CD8-positive, alpha-beta T cell (primary cell): ENCODE measurements at regions of chrX and their contacts with region 1.

Region 1: DNA sequence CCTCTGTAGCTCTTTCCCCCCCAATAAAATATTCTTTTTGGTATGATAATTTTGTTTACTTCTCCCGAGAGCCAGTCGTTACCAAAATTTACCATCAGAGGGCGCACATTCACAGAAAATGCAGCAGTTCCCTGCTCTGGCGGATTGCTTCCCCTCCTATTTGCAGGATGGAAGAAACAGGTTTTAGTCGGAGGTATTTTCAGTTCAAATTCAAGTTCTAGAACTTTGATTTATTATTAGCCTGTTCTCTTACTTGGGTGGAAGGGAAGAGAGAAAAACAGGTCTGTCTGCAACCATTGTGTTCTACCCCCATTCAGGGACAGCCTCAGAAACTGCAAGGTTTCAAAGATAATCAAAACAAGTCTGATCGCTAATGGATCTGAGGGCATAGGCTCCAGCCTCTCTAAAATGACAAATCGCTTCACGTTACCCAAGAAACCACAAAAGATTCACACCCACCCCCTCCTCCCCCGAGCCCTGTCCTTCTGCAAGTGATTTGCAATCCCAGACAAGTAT is 263.8 kb upstream of the RPS6KA3 start:
- DNase-seq: peak; percentile 21 to 70 (median 51)
- ATAC-seq: peak; percentile 62
- H3K4me3 ChIP-seq: no peak overlapping the region
- H3K4me3 Mint-ChIP-seq: no peak overlapping the region
- H3K27ac ChIP-seq: no peak overlapping the region
- H3K27ac Mint-ChIP-seq: no peak overlapping the region
- H3K4me1 ChIP-seq: no peaks in the 10 kb centered on the region
- H3K4me1 Mint-ChIP-seq: peaks cover 9% of the 10 kb centered on the region
- H3K27me3 ChIP-seq: peaks cover 0 to 2% of the 10 kb centered on the region in 2 experiments
- H3K27me3 Mint-ChIP-seq: peaks cover 12% of the 10 kb centered on the region
- CTCF ChIP-seq: peak; percentile 49

Region 2: GRCh38 chrX:20042221-20042620 is 488.2 kb before region 1 on chrX:
- CTCF ChIA-PET with region 1: no interaction called
- POLR2A ChIA-PET with region 1: no interaction called
- intact Hi-C with region 1: no loop called
- DNase-seq: no peak
- ATAC-seq: no peak
- H3K4me3 ChIP-seq: no peak overlapping the region
- H3K4me3 Mint-ChIP-seq: no peak overlapping the region
- H3K27ac ChIP-seq: no peak overlapping the region
- H3K27ac Mint-ChIP-seq: no peak overlapping the region
- H3K4me1 ChIP-seq: no peaks in the 10 kb centered on the region
- H3K4me1 Mint-ChIP-seq: no peaks in the 10 kb centered on the region
- H3K27me3 ChIP-seq: no peaks in the 10 kb centered on the region
- H3K27me3 Mint-ChIP-seq: no peaks in the 10 kb centered on the region
- CTCF ChIP-seq: no peak

Region 3: GRCh38 chrX:20418379-20419150 is 111.9 kb before region 1 on chrX:
- CTCF ChIA-PET with region 1: no interaction called
- POLR2A ChIA-PET with region 1: no interaction called
- intact Hi-C with region 1: no loop called
- DNase-seq: peak in 1 of 9 experiments; percentile 31
- ATAC-seq: peak; percentile 20
- H3K4me3 ChIP-seq: peak overlapping the region in 1 of 2 experiments; percentile 6
- H3K4me3 Mint-ChIP-seq: peak overlapping the region; percentile 46
- H3K27ac ChIP-seq: peak overlapping the region; percentile 24 to 67
- H3K27ac Mint-ChIP-seq: peak overlapping the region; percentile 94
- H3K4me1 ChIP-seq: peaks cover 57% of the 10 kb centered on the region
- H3K4me1 Mint-ChIP-seq: peaks cover 60% of the 10 kb centered on the region
- H3K27me3 ChIP-seq: no peaks in the 10 kb centered on the region
- H3K27me3 Mint-ChIP-seq: no peaks in the 10 kb centered on the region
- CTCF ChIP-seq: no peak

Region 4: DNA sequence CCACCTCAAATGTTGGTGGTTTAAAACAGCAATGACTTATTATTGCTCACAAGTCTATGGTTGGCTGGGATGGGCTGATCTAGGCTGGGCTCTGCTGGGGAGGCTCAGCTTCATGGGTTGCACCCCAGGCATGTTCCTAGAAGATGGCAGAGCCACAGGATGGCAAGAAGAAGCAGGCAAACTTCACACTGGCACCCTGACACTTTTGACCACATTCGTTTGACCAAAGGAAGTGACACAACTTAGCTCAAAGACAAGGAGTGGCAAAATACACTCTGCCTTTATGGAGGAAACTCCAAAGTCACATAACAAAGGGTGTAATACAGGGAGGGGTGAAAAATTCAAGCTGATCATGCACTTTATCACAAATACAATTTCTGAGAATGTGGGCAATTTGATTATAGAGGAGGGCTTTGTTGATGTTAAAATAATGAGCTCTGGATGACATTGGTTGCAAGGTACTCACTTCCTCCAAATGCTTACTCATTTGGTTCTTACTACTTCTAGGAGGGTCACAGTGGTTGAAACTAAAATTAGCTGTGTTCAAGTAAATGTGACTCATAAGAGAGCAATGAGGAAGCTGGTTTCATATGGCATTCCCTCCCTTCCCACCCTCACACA is 14.5 kb before region 1 on chrX:
- CTCF ChIA-PET with region 1: interaction called, 10 read pairs
- POLR2A ChIA-PET with region 1: no interaction called
- intact Hi-C with region 1: no loop called
- DNase-seq: peak in 2 of 9 experiments; percentile 4 to 11
- ATAC-seq: no peak
- H3K4me3 ChIP-seq: no peak overlapping the region
- H3K4me3 Mint-ChIP-seq: no peak overlapping the region
- H3K27ac ChIP-seq: no peak overlapping the region
- H3K27ac Mint-ChIP-seq: no peak overlapping the region
- H3K4me1 ChIP-seq: no peaks in the 10 kb centered on the region
- H3K4me1 Mint-ChIP-seq: peaks cover 5% of the 10 kb centered on the region
- H3K27me3 ChIP-seq: no peaks in the 10 kb centered on the region
- H3K27me3 Mint-ChIP-seq: no peaks in the 10 kb centered on the region
- CTCF ChIP-seq: no peak

Region 5: GRCh38 chrX:21725496-21725895 is 1195.0 kb after region 1 on chrX:
- CTCF ChIA-PET with region 1: interaction called, 29 read pairs
- POLR2A ChIA-PET with region 1: no interaction called
- intact Hi-C with region 1: loop called in 1 of 2 experiments (anchors 2 kb)
- DNase-seq: peak in 2 of 9 experiments; percentile 11 to 27
- ATAC-seq: no peak
- H3K4me3 ChIP-seq: no peak overlapping the region
- H3K4me3 Mint-ChIP-seq: no peak overlapping the region
- H3K27ac ChIP-seq: no peak overlapping the region
- H3K27ac Mint-ChIP-seq: no peak overlapping the region
- H3K4me1 ChIP-seq: no peaks in the 10 kb centered on the region
- H3K4me1 Mint-ChIP-seq: no peaks in the 10 kb centered on the region
- H3K27me3 ChIP-seq: no peaks in the 10 kb centered on the region
- H3K27me3 Mint-ChIP-seq: peaks cover 6% of the 10 kb centered on the region
- CTCF ChIP-seq: no peak

Region 6: DNA sequence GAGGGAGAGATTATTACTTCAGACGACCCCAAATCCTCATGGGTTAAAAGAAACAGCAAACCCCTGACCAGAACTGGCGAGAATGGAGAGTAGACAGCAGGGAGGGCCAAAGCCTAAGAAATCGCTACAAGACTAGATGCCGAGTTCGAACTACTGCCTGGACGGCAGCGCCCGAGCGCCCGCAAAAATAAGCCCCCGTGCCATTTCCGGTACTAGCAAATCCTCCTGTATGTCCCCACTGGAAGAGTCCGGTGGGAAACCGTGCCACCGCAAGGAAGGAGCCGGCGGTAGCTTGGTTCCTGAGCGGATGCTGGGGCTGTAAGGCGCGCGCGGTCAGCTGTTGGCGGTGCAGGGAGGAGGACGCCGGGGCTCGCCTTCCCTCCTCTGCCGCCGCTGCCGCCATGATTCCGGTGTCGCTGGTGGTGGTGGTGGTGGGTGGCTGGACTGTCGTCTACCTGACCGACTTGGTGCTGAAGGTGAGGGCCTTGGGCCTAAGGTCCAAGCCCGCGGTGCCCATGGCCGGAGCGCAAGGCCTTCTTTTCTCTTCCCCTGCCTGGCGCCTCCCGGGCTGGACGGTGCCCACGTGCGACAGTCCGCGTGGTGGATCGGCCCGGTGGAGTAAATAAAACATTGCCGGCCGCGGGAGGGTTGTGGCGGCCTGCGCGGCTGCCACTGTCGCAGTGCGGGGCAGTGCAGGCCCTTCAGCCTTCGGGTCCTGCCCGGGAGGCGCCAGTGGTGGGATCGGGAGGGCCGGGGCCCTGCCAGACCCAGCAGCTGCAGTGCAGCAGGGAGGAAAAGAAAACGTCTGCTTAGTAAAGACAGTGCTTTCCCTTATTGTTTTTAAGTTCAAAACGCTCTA is 1309.1 kb after region 1 on chrX and contains the start of gene MBTPS2:
- CTCF ChIA-PET with region 1: no interaction called
- POLR2A ChIA-PET with region 1: no interaction called
- intact Hi-C with region 1: loop called in 1 of 2 experiments (anchors 5 kb)
- DNase-seq: peak; percentile 61 to 89 (median 79)
- ATAC-seq: peak; percentile 93
- H3K4me3 ChIP-seq: peak within 1 kb of the TSS; percentile 78 to 80
- H3K4me3 Mint-ChIP-seq: peak within 1 kb of the TSS; percentile 89
- H3K27ac ChIP-seq: peak within 1 kb of the TSS; percentile 65 to 75
- H3K27ac Mint-ChIP-seq: peak within 1 kb of the TSS; percentile 94
- H3K4me1 ChIP-seq: no peaks in the 10 kb centered on the region
- H3K4me1 Mint-ChIP-seq: peaks cover 7% of the 10 kb centered on the region
- H3K27me3 ChIP-seq: no peaks in the 10 kb centered on the region
- H3K27me3 Mint-ChIP-seq: no peaks in the 10 kb centered on the region
- CTCF ChIP-seq: no peak
- total RNA-seq, gene MBTPS2: 2.5 to 2.8 TPM

Region 7: DNA sequence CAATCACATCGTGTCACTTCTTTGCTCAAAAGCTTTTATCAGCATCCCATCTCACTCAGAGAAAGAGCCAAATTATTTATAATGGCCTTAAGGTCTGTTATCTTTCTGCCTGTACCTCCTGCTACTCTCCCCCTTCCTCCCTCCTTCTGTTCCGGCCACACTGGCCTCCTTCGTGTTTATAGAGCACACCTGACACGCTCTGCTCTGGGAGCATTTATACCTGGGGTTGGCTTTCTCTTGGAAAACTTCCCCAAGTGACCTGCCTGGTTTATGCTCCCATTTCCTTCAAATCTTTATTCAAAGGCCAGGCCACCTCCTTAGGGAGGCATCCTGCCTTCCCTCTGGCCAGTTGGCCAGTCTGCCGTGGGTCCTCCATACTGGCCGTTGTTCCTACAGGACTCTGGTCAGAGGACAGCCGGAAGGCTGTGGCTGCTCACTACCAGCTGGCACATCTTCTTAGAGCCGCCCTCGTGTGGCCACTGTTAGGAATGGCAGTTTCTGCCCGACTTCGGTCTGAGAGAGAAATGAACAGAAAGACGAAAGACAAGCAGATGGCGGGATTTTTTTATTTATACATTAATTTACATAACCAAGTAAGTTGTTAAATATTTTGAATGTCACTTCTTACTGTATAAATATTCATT is 1662.1 kb after region 1 on chrX:
- CTCF ChIA-PET with region 1: no interaction called
- POLR2A ChIA-PET with region 1: no interaction called
- intact Hi-C with region 1: loop called in 1 of 2 experiments (anchors 2 kb)
- DNase-seq: peak; percentile 1 to 65 (median 39)
- ATAC-seq: peak; percentile 63
- H3K4me3 ChIP-seq: no peak overlapping the region
- H3K4me3 Mint-ChIP-seq: no peak overlapping the region
- H3K27ac ChIP-seq: no peak overlapping the region
- H3K27ac Mint-ChIP-seq: no peak overlapping the region
- H3K4me1 ChIP-seq: no peaks in the 10 kb centered on the region
- H3K4me1 Mint-ChIP-seq: peaks cover 3% of the 10 kb centered on the region
- H3K27me3 ChIP-seq: no peaks in the 10 kb centered on the region
- H3K27me3 Mint-ChIP-seq: peaks cover 2% of the 10 kb centered on the region
- CTCF ChIP-seq: peak; percentile 69